GM12878 (cell line): ENCODE measurements at regions of chr18 and their contacts with region 1.

Region 1: GRCh38 chr18:40152859-40153258 is 1802.2 kb upstream of the PIK3C3 start:
- DNase-seq: no peak
- ATAC-seq: no peak; the same call in 2 of the 3 replicates
- H3K4me3 ChIP-seq: no peak overlapping the region
- H3K27ac ChIP-seq: no peak overlapping the region
- H3K4me1 ChIP-seq: no peaks in the 10 kb centered on the region
- H3K27me3 ChIP-seq: no peaks in the 10 kb centered on the region
- CTCF ChIP-seq: no peak
- EP300 ChIP-seq: no peak
- POLR2A ChIP-seq: no peak
- RAD21 ChIP-seq: no peak

Region 2: DNA sequence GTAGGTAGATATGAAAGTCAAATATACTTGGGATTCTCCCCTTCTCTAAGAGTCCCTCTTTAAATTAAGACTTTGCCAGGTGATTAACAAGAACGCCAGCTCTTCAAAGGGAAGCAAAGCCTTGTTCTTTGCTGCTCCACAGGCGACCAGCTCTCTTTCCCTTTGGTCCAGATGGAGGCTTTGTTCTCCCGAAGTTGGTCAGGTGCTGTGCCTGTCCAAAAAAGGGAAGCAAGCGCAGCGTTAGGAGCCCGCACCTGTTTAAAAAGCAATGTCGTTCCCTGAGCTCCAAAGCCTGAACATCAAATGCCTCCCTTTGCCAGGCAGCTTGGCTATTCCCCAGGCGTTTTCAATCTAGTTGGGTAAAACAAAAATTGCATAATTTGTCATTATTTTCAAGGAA is 110.9 kb before region 1 on chr18:
- CTCF ChIA-PET with region 1: no interaction called
- POLR2A ChIA-PET with region 1: no interaction called
- RAD21 ChIA-PET with region 1: no interaction called
- SMC1A ChIA-PET with region 1: no interaction called
- in situ Hi-C with region 1: loop called (anchors 25 kb)
- intact Hi-C with region 1: no loop called
- DNase-seq: no peak
- ATAC-seq: no peak
- H3K4me3 ChIP-seq: no peak overlapping the region
- H3K27ac ChIP-seq: no peak overlapping the region
- H3K4me1 ChIP-seq: no peaks in the 10 kb centered on the region
- H3K27me3 ChIP-seq: no peaks in the 10 kb centered on the region
- CTCF ChIP-seq: no peak
- EP300 ChIP-seq: no peak
- POLR2A ChIP-seq: no peak
- RAD21 ChIP-seq: no peak

Region 3: DNA sequence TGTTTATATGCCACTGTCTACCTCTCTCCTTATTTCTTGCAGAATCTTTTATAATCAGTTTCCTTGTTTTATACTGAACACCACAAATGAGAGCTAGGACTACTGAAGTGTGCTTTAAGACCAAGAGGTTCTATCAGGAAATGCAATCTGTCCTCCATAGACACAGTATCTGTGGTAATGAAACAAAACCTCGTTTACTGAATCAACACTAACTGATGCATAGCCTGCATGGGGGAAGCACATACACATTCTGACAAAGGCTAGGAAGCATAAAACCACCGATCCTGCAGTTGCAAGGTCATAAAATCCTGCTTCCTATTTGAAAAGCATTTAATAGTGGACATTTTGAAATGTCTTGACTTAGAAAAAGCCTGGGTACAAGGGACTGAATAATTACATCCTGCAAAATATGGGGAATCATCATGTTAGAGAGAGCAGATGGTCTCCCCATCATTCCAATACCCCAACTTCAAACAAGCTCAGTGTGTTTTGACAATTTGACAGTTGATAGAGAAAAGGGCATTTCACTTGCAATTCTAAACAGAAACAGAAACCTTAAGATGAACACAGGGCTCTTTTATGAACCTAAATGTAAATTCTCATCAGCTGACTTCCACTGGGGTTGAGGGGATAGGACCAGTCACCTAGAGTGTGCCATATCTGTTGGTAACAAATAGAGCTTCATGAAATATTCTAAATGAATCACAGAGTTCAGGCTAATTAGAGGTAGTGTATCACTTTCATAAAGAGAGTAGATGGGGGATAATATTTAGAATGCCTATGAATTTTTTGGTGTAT is 43.4 kb before region 1 on chr18:
- CTCF ChIA-PET with region 1: interaction called, 3 read pairs
- POLR2A ChIA-PET with region 1: no interaction called
- RAD21 ChIA-PET with region 1: interaction called, 8 read pairs
- SMC1A ChIA-PET with region 1: interaction called, 10 read pairs
- in situ Hi-C with region 1: no loop called
- intact Hi-C with region 1: no loop called
- DNase-seq: no peak
- ATAC-seq: peak; percentile 89
- H3K4me3 ChIP-seq: no peak overlapping the region
- H3K27ac ChIP-seq: no peak overlapping the region
- H3K4me1 ChIP-seq: no peaks in the 10 kb centered on the region
- H3K27me3 ChIP-seq: no peaks in the 10 kb centered on the region
- CTCF ChIP-seq: no peak
- EP300 ChIP-seq: no peak
- POLR2A ChIP-seq: no peak
- RAD21 ChIP-seq: no peak

Region 4: GRCh38 chr18:40133253-40133652 is 19.6 kb before region 1 on chr18:
- CTCF ChIA-PET with region 1: interaction called, 4 read pairs
- POLR2A ChIA-PET with region 1: interaction called, 3 read pairs
- RAD21 ChIA-PET with region 1: interaction called, 4 read pairs
- SMC1A ChIA-PET with region 1: interaction called, 11 read pairs
- in situ Hi-C with region 1: no loop called
- intact Hi-C with region 1: no loop called
- DNase-seq: no peak
- ATAC-seq: peak; percentile 70
- H3K4me3 ChIP-seq: no peak overlapping the region
- H3K27ac ChIP-seq: no peak overlapping the region
- H3K4me1 ChIP-seq: no peaks in the 10 kb centered on the region
- H3K27me3 ChIP-seq: no peaks in the 10 kb centered on the region
- CTCF ChIP-seq: no peak
- EP300 ChIP-seq: 0 out of 4 replicates have a peak, but pooled peaks of 1 of the 2 experiments have one; percentile 12
- POLR2A ChIP-seq: no peak
- RAD21 ChIP-seq: no peak

Region 5: DNA sequence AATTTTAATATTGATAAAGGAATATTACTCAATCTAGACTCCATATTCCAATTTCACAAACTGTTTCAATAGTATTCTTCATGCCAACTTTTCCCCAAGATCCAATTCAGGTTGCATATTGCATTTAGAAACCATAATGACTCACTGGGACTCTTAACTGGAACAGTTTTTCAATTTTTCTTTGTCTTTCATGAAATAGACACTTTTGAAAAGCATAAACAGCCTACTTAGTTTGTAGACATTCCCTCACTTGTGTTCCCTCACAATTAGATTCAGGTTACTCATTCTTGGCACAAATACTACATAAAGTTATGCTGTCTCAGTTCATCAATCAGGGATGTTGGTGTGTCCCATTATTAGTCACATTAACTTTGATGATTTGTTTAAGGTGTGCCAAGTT is 33.8 kb after region 1 on chr18:
- CTCF ChIA-PET with region 1: no interaction called
- POLR2A ChIA-PET with region 1: no interaction called
- RAD21 ChIA-PET with region 1: no interaction called
- SMC1A ChIA-PET with region 1: no interaction called
- in situ Hi-C with region 1: no loop called
- intact Hi-C with region 1: no loop called
- DNase-seq: no peak
- ATAC-seq: no peak
- H3K4me3 ChIP-seq: no peak overlapping the region
- H3K27ac ChIP-seq: no peak overlapping the region
- H3K4me1 ChIP-seq: no peaks in the 10 kb centered on the region
- H3K27me3 ChIP-seq: no peaks in the 10 kb centered on the region
- CTCF ChIP-seq: no peak
- EP300 ChIP-seq: no peak
- POLR2A ChIP-seq: no peak
- RAD21 ChIP-seq: no peak

Region 6: GRCh38 chr18:40258311-40258710 is 105.5 kb after region 1 on chr18:
- CTCF ChIA-PET with region 1: no interaction called
- POLR2A ChIA-PET with region 1: no interaction called
- RAD21 ChIA-PET with region 1: no interaction called
- SMC1A ChIA-PET with region 1: no interaction called
- in situ Hi-C with region 1: no loop called
- intact Hi-C with region 1: no loop called
- DNase-seq: no peak
- ATAC-seq: no peak
- H3K4me3 ChIP-seq: no peak overlapping the region
- H3K27ac ChIP-seq: no peak overlapping the region
- H3K4me1 ChIP-seq: no peaks in the 10 kb centered on the region
- H3K27me3 ChIP-seq: no peaks in the 10 kb centered on the region
- CTCF ChIP-seq: no peak
- EP300 ChIP-seq: no peak
- POLR2A ChIP-seq: no peak
- RAD21 ChIP-seq: no peak

Region 7: GRCh38 chr18:40949114-40949950 is 796.5 kb after region 1 on chr18:
- CTCF ChIA-PET with region 1: no interaction called
- POLR2A ChIA-PET with region 1: no interaction called
- RAD21 ChIA-PET with region 1: no interaction called
- SMC1A ChIA-PET with region 1: no interaction called
- in situ Hi-C with region 1: no loop called
- intact Hi-C with region 1: no loop called
- DNase-seq: no peak
- ATAC-seq: no peak; the same call in 2 of the 3 replicates
- H3K4me3 ChIP-seq: no peak overlapping the region
- H3K27ac ChIP-seq: no peak overlapping the region
- H3K4me1 ChIP-seq: no peaks in the 10 kb centered on the region
- H3K27me3 ChIP-seq: no peaks in the 10 kb centered on the region
- CTCF ChIP-seq: no peak
- EP300 ChIP-seq: no peak
- POLR2A ChIP-seq: no peak
- RAD21 ChIP-seq: no peak